GM10248 (cell line): ENCODE measurements at regions of chr17 and their contacts with region 1.

Region 1: GRCh38 chr17:42609182-42609813 is at the starts of genes RETREG3 and TUBG1:
- DNase-seq: peak; percentile 100
- CTCF ChIP-seq: no peak

Region 2: DNA sequence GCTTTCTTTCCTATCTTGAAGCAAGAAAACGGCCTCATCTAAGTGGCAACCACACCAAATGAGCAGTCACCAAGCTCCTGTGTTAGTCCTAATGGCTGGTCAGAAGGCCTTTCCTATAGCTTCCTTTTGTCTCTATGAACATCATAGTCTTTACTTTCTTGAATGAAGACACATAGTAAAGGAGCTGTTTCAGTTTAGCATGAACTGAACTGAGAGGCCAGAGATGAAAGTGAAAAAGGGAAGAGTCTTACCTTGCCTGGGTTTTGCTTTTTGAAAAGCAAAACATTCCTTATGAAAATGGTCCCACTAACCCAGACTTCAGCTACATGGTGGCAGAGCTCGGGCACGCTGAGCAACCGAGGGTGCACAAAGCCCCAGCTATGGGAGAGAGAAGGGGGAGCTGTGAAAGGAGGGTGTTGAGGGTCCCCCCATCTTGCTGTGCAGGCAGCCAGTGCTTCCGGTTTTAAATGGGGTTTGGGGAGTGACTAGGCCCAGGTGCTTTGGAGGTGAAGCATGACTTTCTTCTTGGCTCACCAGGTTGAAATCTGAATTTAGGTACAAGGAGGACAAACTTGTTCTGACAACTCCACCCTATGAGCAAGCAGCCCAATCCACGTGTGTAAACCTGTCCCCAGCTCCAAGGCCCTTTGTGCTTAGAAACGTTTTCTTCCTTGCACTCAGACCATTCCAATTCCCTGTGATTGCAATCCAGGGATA is 22.6 kb before region 1 on chr17:
- CTCF ChIA-PET with region 1: interaction called, 120 read pairs
- POLR2A ChIA-PET with region 1: interaction called, 3 read pairs
- DNase-seq: peak; percentile 63
- CTCF ChIP-seq: no peak